Head of caudate nucleus (tissue), 42 donors: ENCODE measurements at regions of chr9 and their contacts with region 1.

Region 1: GRCh38 chr9:134929193-134930158 is 11.8 kb upstream of the FCN1 start:
- DNase-seq: peak in 23 of 42 donors; percentile 10 to 65 (median 35)

Region 2: GRCh38 chr9:134992755-134993124 is 63.3 kb after region 1 on chr9:
- intact Hi-C with region 1: loop called (anchors 10 kb)
- DNase-seq: peak in 7 of 42 donors; percentile 1 to 33 (median 17)